GM18951 (cell line): ENCODE measurements at regions of chr4 and their contacts with region 1.

Region 1: GRCh38 chr4:15239866-15240265 is 188.0 kb upstream of the C1QTNF7 start:
- POLR2A ChIP-seq: no peak

Region 2: DNA sequence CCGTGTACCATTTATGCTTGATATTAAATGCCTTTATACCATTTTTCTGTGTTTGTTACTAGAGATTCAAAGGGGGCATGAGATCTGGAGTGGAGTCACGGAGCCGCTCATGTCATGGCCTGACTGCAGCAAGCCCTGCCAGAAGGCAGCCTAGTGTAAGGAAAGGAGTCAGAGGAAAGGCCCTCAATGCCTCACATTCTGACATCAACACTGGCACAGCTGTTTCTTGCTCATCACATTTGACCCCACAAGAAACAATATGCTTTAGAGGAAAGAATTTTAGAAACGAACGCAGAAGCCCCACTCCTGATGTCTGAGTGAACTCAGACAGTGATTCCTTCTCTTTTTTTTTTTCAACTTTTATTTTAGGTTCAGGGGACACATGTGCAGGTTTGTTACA is 560.0 kb before region 1 on chr4:
- in situ Hi-C with region 1: no loop called
- POLR2A ChIP-seq: no peak

Region 3: GRCh38 chr4:15054541-15054940 is 185.3 kb before region 1 on chr4:
- in situ Hi-C with region 1: no loop called
- POLR2A ChIP-seq: no peak

Region 4: DNA sequence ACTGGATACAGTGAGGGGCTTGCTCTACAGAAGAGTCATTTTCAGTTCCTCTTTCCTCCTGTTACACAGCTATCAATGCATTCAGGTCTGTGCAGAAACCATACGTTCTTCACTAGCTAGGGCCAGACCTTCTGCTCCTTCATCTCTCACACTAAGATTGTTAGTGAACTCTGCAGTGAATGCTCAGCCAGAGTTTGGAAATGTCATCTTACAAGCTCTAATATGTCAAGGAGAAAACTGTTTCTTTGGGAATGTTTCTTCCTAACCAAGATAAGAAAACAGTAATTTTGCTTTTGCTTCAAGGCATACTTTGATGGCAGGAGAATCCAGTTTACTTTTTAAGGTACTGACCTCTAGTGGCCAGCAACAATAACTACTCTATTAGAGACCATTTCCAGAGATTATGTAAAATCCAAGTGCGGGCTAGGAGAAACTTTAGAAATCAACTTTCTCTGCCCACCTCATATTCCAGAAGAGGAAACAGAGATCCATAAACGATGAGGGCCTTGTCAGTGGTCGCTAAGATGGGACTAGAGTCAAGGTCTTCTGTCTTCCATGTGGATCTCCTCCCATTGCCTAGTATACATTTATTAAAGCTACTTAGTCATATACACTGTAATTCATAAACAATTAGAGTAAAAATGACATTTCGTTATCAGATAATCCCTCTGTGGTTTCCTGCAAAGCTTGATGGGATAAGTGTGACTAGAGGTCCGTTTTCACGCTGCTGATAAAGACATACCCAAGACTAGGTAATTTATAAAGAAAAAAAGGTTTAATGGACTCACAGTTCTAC is 217.7 kb after region 1 on chr4:
- in situ Hi-C with region 1: loop called (anchors 5 kb)
- POLR2A ChIP-seq: no peak